Activated CD8-positive, alpha-beta memory T cell treated with anti-CD3 and anti-CD28 coated beads, Interleukin-2, amount 10 ng/mL, durations not matched to agents 7 days and 5 days (primary cell): ENCODE measurements at regions of chr4 and their contacts with region 1.

Region 1: GRCh38 chr4:17550549-17550948 is 26.4 kb upstream of the LAP3 start:
- DNase-seq: no peak
- ATAC-seq: no peak
- H3K4me3 Mint-ChIP-seq: no peak overlapping the region
- H3K27ac Mint-ChIP-seq: no peak overlapping the region
- H3K4me1 Mint-ChIP-seq: peaks cover 11% of the 10 kb centered on the region
- H3K27me3 Mint-ChIP-seq: peaks cover 19% of the 10 kb centered on the region

Region 2: GRCh38 chr4:17260166-17260907 is 290.2 kb before region 1 on chr4:
- CTCF ChIA-PET with region 1: no interaction called
- DNase-seq: peak; percentile 42
- ATAC-seq: peak; percentile 39
- H3K4me3 Mint-ChIP-seq: no peak overlapping the region
- H3K27ac Mint-ChIP-seq: no peak overlapping the region
- H3K4me1 Mint-ChIP-seq: peaks cover 4% of the 10 kb centered on the region
- H3K27me3 Mint-ChIP-seq: peaks cover 6% of the 10 kb centered on the region

Region 3: DNA sequence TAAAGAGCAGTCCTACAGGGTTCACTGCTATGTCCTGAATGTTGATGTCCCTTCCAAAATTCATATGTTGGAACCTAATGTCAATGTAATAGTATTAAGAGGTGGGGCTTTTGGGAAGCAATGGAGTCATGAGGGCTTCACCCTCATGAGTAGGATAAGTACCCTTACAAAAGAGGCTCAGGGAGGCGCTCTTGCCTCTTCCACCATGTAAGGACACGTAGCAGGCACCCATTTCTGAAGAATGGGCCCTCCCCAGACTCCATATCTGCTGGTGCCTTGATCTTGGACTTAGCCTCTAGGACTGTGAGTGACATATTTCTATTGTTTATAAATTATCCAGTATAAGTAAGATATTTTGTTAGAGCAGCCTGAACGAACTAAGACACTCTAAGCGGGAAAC is 79.7 kb after region 1 on chr4:
- CTCF ChIA-PET with region 1: interaction called, 24 read pairs
- DNase-seq: no peak
- ATAC-seq: no peak
- H3K4me3 Mint-ChIP-seq: no peak overlapping the region
- H3K27ac Mint-ChIP-seq: no peak overlapping the region
- H3K4me1 Mint-ChIP-seq: peaks cover 6% of the 10 kb centered on the region
- H3K27me3 Mint-ChIP-seq: no peaks in the 10 kb centered on the region

Region 4: GRCh38 chr4:17636696-17637622 is 86.4 kb after region 1 on chr4:
- CTCF ChIA-PET with region 1: interaction called, 24 read pairs
- DNase-seq: peak; percentile 79
- ATAC-seq: peak; percentile 96
- H3K4me3 Mint-ChIP-seq: no peak overlapping the region
- H3K27ac Mint-ChIP-seq: no peak overlapping the region
- H3K4me1 Mint-ChIP-seq: peaks cover 2% of the 10 kb centered on the region
- H3K27me3 Mint-ChIP-seq: no peaks in the 10 kb centered on the region

Region 5: DNA sequence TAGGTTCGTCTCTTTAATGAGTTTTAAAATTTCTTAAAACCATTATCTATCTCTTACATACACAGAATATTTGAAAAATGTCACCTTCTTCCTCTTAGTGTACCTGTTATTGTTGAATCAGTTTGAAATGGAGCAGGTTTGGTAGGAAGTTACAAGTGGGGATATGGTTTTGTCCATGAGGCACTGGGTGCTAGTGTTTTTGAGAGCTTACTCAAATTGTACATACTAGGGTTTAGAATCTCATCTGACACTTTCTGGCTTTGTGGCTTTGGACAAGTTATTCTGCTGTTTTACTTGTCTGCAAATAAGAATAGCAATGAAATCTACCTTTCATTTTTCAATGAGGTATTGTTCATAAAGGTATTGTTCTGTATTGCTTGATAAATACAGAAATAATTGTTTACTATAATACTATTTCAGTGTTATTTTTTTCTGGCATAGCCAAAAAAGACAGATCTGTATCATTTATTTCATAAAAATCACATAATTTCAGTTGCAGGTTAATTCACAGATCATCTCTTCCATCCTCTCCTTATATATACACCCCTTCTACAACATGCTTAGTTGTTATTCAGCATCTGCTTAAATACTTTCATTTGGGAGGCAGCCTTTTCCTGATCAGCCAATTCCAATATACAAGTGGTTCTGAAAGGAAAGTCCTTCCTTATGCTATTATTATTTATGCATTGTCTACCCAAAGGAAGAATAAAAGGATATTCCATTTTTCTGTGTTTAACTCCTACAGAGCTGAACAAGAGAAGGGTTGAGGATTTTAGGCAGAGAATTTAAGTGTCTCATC is 273.5 kb after region 1 on chr4:
- CTCF ChIA-PET with region 1: no interaction called
- DNase-seq: no peak
- ATAC-seq: no peak
- H3K4me3 Mint-ChIP-seq: no peak overlapping the region
- H3K27ac Mint-ChIP-seq: no peak overlapping the region
- H3K4me1 Mint-ChIP-seq: peaks cover 28% of the 10 kb centered on the region
- H3K27me3 Mint-ChIP-seq: no peaks in the 10 kb centered on the region